ENCODE measurements at regions of chr1 and their contacts with region 1.

Region 1: GRCh38 chr1:21782868-21783678 is at the start of gene USP48:
- DNase-seq: peak; percentile 98
- H3K4me3 Mint-ChIP-seq: peak within 1 kb of the TSS; percentile 91
- H3K27ac Mint-ChIP-seq: peak within 1 kb of the TSS; percentile 100
- H3K4me1 Mint-ChIP-seq: peaks cover 26% of the 10 kb centered on the region
- H3K27me3 Mint-ChIP-seq: peaks cover 3% of the 10 kb centered on the region
- total RNA-seq, gene USP48: 88.7 and 97.1 TPM in 2 replicates

Region 2: DNA sequence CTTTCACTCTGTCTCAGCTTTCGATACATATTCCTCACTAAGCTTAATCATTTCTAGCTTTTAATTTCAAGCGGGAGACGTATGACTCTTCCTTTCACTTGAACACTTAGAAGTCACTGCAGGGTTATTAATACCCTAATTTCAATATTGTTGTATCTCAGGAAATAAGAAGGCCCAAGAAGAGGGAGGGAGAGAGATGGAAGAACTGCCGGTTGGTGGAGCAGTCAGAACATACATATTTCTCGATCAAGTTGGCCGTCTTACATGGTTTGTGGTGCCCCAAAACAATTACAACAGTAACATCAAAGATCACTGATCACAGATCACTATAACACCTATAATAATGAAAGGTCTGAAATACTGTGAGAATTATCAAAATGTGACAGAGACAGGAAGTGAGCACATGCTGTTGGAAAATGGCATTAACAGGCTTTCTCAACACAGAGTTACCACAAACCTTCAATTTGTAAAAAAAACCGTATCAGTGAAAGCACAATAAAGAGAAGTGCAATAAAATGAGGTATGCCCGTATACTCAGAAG is 850.6 kb before region 1 on chr1:
- intact Hi-C with region 1: loop called (anchors 5 kb)
- DNase-seq: no peak
- H3K4me3 Mint-ChIP-seq: peak overlapping the region; percentile 19
- H3K27ac Mint-ChIP-seq: peak overlapping the region; percentile 78
- H3K4me1 Mint-ChIP-seq: peaks cover 19% of the 10 kb centered on the region
- H3K27me3 Mint-ChIP-seq: no peaks in the 10 kb centered on the region

Region 3: DNA sequence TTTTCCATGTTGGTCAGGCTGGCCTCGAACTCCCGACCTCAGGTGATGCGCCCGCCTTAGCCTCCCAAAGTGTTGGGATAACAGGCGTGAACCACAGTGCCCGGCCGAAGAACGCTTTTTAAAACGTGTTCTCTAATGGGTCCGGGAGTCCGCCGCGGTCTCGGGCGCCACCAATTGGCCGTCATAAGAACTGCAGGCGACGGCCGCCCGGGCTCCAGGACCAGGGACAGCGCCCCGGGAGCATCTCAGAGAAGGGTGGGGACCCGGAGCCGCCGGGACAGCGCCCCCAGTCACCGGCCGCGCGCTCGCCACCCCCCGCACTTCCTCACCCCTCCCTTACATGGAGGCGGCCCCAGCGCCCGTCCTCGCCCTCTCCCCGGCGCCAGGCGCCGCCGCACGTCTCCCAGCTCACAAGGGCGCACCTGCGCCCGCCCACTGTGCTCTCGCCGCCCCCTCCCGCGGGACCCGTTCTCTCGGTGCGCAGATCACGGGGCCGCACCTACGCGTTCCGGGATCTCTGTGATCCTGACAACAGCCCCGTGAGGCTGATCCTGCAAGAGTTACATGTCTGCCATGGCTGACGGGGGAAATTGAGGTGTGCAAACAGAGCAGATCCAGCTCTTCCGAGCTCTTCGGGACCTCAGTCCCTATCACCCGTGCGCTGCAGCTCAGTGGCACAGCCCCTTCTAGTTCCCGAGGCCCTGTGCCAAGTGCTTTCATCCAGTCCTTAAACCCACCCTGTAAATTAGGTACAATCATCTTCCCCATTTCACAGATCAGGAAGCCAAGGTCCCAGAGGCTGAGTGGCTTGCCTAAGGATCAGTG is 123.8 kb before region 1 on chr1:
- intact Hi-C with region 1: loop called (anchors 2 kb)
- DNase-seq: peak; percentile 73
- H3K4me3 Mint-ChIP-seq: peak overlapping the region; percentile 30
- H3K27ac Mint-ChIP-seq: no peak overlapping the region
- H3K4me1 Mint-ChIP-seq: no peaks in the 10 kb centered on the region
- H3K27me3 Mint-ChIP-seq: peaks cover 34% of the 10 kb centered on the region

Region 4: DNA sequence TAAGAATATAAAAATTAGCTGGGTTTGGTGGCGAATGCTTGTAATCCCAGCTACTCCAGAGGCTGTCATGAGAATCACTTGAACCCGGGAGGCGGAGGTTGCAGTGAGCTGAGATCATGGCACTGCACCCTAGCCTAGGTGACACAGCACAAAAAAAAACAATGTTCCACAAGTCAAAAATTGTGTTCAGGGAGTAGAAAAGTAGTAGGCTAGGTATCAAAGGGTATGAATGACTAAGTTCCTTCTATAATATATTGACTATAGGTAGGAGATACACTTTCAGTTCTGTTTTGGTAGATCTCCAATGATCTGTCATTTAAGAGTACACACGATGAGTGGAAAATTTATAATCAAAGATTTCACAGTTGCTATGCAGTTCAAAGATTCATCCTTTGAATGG is 16.9 kb before region 1 on chr1:
- intact Hi-C with region 1: loop called (anchors 1 kb)
- DNase-seq: no peak
- H3K4me3 Mint-ChIP-seq: no peak overlapping the region
- H3K27ac Mint-ChIP-seq: peak overlapping the region; percentile 90
- H3K4me1 Mint-ChIP-seq: peaks cover 49% of the 10 kb centered on the region
- H3K27me3 Mint-ChIP-seq: no peaks in the 10 kb centered on the region

Region 5: DNA sequence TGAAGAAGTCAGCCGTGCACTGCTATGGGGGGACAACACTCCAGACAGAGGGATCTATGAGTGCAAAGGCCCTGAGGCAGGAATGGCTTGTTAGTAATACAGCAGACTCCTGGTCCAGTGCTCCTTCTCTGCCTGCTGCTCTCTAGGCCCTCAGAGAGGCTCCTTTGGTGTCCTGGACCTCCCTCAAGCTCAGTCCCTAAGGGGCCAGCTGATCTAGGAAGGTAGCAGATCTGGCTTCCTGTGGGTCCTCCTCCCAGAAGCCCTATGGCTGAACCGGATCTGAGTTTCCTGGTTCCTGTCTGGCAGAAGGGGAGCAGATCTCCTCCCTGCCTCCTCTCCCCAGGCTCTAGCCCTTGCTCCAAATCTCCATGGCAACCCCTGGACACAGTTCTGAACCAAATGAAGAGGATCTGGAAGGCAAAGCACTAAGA is 28.8 kb after region 1 on chr1 and contains the start of gene LDLRAD2:
- intact Hi-C with region 1: no loop called
- DNase-seq: no peak
- H3K4me3 Mint-ChIP-seq: no peak within 1 kb of the TSS
- H3K27ac Mint-ChIP-seq: no peak within 1 kb of the TSS
- H3K4me1 Mint-ChIP-seq: peaks cover 6% of the 10 kb centered on the region
- H3K27me3 Mint-ChIP-seq: peaks cover 19% of the 10 kb centered on the region
- total RNA-seq, gene LDLRAD2: not detected in 2 replicates

Region 6: GRCh38 chr1:22018583-22019559 is 235.8 kb after region 1 on chr1:
- intact Hi-C with region 1: loop called (anchors 1 kb)
- DNase-seq: peak; percentile 70
- H3K4me3 Mint-ChIP-seq: peak overlapping the region; percentile 32
- H3K27ac Mint-ChIP-seq: peak overlapping the region; percentile 96
- H3K4me1 Mint-ChIP-seq: peaks cover 22% of the 10 kb centered on the region
- H3K27me3 Mint-ChIP-seq: peaks cover 3% of the 10 kb centered on the region

Region 7: DNA sequence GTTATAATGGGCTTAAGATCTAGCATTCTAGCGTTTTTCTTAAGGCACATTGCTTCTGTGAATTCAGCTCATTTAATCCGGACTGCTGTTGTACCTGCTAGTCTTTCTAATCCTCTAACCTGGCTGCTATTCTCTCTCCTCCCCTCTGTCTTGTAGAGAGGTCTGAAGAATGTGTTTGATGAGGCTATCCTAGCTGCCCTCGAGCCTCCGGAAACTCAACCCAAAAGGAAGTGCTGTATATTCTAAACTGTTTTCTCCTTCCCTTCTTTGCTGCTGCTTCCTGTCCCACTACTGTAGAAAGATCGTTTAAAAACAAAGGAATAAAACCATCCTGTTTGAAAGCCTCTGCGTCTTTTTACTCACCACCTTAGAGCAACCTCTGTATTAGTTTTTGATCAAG is 306.7 kb after region 1 on chr1:
- intact Hi-C with region 1: loop called (anchors 1 kb)
- DNase-seq: peak; percentile 11
- H3K4me3 Mint-ChIP-seq: peak overlapping the region; percentile 50
- H3K27ac Mint-ChIP-seq: peak overlapping the region; percentile 80
- H3K4me1 Mint-ChIP-seq: peaks cover 83% of the 10 kb centered on the region
- H3K27me3 Mint-ChIP-seq: no peaks in the 10 kb centered on the region